ENCODE measurements at regions of chr2 and their contacts with region 1.

Region 1: GRCh38 chr2:70948337-70949003 is 12.8 kb downstream of the ATP6V1B1 start:
- DNase-seq: peak; percentile 85
- ATAC-seq: peak; percentile 96
- H3K4me3 Mint-ChIP-seq: peak overlapping the region; percentile 74
- H3K27ac Mint-ChIP-seq: peak overlapping the region; percentile 51
- H3K4me1 Mint-ChIP-seq: peaks cover 6% of the 10 kb centered on the region
- H3K27me3 Mint-ChIP-seq: peaks cover 10% of the 10 kb centered on the region
- CTCF ChIP-seq: peak; percentile 88

Region 2: GRCh38 chr2:70789304-70790135 is 158.9 kb before region 1 on chr2:
- CTCF ChIA-PET with region 1: interaction called, 40 read pairs
- POLR2A ChIA-PET with region 1: no interaction called
- intact Hi-C with region 1: loop called (anchors 5 kb)
- DNase-seq: peak; percentile 87
- ATAC-seq: peak; percentile 80
- H3K4me3 Mint-ChIP-seq: peak overlapping the region; percentile 61
- H3K27ac Mint-ChIP-seq: no peak overlapping the region
- H3K4me1 Mint-ChIP-seq: peaks cover 14% of the 10 kb centered on the region
- H3K27me3 Mint-ChIP-seq: peaks cover 50% of the 10 kb centered on the region
- CTCF ChIP-seq: peak; percentile 83

Region 3: DNA sequence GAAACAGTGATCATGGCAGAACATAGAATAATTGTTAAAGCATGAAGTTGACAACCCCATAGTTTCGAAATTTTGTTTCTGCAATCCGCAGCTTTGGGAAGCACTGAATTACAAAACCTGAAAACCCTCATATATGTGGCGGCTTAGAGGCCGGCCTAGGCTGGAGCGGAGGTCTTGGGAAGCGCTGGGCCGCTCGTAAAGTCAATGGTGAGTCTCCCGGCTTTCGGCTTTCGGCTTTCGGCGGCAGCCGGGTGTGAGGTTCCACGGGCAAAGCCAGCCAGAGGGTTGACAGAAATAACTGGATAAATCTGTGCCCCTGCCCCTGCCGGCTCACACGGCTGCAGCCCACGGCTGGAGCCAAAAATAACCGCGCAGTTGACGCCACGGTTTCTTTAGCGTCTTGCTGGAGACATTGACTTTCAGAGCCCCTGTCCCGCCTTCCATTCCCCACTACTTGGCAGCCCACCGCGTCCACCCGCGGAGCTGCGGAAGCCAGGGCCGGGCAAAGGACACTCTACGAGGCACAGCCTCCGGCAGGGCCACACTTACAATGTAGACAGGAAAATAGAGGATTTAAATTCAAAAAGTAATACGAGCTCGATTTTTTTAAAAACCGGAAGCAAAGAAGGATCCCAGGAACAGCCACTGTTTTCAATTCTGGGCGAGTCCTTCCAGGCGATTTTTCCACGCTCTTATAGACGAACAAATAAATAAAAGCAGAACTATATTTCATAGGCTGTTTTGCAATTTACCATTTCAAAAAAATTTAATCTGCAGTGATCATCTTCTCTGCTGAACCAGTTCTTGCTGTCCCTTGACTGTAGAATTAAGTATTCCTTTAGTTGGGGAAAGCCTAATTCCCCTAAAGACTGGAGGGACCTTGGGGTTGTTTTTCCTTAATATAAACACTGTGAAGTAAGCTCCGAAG is 41.1 kb before region 1 on chr2:
- CTCF ChIA-PET with region 1: interaction called, 12 read pairs
- POLR2A ChIA-PET with region 1: no interaction called
- intact Hi-C with region 1: no loop called
- DNase-seq: no peak
- ATAC-seq: no peak
- H3K4me3 Mint-ChIP-seq: peak overlapping the region; percentile 54
- H3K27ac Mint-ChIP-seq: no peak overlapping the region
- H3K4me1 Mint-ChIP-seq: peaks cover 10% of the 10 kb centered on the region
- H3K27me3 Mint-ChIP-seq: peaks cover 73% of the 10 kb centered on the region
- CTCF ChIP-seq: no peak

Region 4: GRCh38 chr2:70919672-70920366 is 28.7 kb before region 1 on chr2:
- CTCF ChIA-PET with region 1: interaction called, 23 read pairs
- POLR2A ChIA-PET with region 1: no interaction called
- intact Hi-C with region 1: no loop called
- DNase-seq: peak; percentile 84
- ATAC-seq: peak; percentile 90
- H3K4me3 Mint-ChIP-seq: no peak overlapping the region
- H3K27ac Mint-ChIP-seq: no peak overlapping the region
- H3K4me1 Mint-ChIP-seq: no peaks in the 10 kb centered on the region
- H3K27me3 Mint-ChIP-seq: peaks cover 17% of the 10 kb centered on the region
- CTCF ChIP-seq: peak; percentile 90

Region 5: DNA sequence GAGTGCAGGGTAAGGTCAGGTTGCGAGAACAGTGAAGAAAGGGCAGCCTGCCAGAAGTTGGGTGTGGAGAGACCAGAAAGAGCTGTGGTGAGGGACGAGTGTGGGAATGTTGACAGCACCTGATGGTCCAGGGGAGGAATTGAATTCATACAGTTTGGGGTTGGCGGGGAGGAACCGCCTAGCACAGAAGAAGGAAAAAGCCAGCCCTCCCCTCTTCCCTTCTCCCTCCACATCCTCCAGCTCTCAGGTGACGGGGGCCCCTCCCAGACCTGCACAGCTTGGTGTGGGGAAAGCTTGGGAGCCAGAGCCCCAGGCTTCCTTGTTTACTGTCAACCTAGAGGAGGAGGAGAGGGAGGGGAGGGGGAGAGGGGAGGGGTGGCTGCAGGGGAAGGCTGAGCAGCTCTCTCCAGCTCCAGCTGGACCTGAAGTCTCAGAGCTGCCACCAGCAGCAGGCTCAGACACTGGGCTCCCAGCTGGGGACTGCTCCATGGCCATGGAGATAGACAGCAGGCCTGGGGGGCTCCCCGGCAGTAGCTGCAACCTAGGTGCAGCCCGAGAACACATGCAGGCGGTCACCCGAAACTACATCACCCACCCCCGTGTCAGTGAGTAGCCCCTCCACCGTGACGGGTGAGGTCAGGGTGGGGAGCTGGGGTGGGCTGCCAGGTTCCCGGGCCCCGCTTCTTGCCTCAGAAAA is 12.9 kb before region 1 on chr2 and contains the start of gene ATP6V1B1:
- CTCF ChIA-PET with region 1: interaction called, 37 read pairs
- POLR2A ChIA-PET with region 1: no interaction called
- intact Hi-C with region 1: no loop called
- DNase-seq: no peak
- ATAC-seq: no peak
- H3K4me3 Mint-ChIP-seq: no peak within 1 kb of the TSS
- H3K27ac Mint-ChIP-seq: no peak within 1 kb of the TSS
- H3K4me1 Mint-ChIP-seq: no peaks in the 10 kb centered on the region
- H3K27me3 Mint-ChIP-seq: peaks cover 13% of the 10 kb centered on the region
- CTCF ChIP-seq: no peak
- total RNA-seq, gene ATP6V1B1: not detected

Region 6: GRCh38 chr2:70964596-70965386 is 16.3 kb after region 1 on chr2:
- CTCF ChIA-PET with region 1: interaction called, 55 read pairs
- POLR2A ChIA-PET with region 1: no interaction called
- intact Hi-C with region 1: no loop called
- DNase-seq: peak; percentile 89
- ATAC-seq: peak; percentile 97
- H3K4me3 Mint-ChIP-seq: peak overlapping the region; percentile 77
- H3K27ac Mint-ChIP-seq: no peak overlapping the region
- H3K4me1 Mint-ChIP-seq: peaks cover 3% of the 10 kb centered on the region
- H3K27me3 Mint-ChIP-seq: peaks cover 18% of the 10 kb centered on the region
- CTCF ChIP-seq: peak; percentile 93

Region 7: DNA sequence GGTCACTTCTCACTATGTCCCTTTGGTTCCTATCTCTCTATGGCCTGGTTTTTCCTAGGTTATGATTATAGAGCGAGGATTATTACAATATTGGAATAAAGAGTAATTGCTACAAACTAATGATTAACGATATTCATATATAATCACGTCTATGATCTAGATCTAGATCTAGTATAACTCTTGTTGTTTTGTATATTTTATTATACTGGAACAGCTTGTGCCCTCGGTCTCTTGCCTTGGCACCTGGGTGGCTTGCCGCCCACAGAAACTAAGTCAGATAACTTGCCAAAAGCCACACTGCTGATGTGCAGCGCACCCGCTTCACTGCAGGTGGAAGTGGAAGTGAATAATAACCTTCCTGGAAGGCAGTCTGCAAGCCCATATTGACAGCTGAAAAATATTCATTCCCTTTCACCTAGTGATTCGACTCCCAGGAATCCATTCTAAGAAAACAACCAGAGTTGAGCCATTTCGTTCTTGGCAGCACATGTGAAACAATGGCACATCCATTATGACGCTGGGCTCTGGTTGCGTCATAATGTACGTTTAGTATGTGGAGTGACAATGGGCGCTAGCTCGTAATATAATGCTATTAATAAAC is 29.2 kb after region 1 on chr2:
- CTCF ChIA-PET with region 1: interaction called, 10 read pairs
- POLR2A ChIA-PET with region 1: no interaction called
- intact Hi-C with region 1: no loop called
- DNase-seq: peak; percentile 67
- ATAC-seq: peak; percentile 35
- H3K4me3 Mint-ChIP-seq: peak overlapping the region; percentile 67
- H3K27ac Mint-ChIP-seq: peak overlapping the region; percentile 83
- H3K4me1 Mint-ChIP-seq: peaks cover 12% of the 10 kb centered on the region
- H3K27me3 Mint-ChIP-seq: no peaks in the 10 kb centered on the region
- CTCF ChIP-seq: peak; percentile 38